ENCODE measurements at regions of chr14 and their contacts with region 1.

Region 1: DNA sequence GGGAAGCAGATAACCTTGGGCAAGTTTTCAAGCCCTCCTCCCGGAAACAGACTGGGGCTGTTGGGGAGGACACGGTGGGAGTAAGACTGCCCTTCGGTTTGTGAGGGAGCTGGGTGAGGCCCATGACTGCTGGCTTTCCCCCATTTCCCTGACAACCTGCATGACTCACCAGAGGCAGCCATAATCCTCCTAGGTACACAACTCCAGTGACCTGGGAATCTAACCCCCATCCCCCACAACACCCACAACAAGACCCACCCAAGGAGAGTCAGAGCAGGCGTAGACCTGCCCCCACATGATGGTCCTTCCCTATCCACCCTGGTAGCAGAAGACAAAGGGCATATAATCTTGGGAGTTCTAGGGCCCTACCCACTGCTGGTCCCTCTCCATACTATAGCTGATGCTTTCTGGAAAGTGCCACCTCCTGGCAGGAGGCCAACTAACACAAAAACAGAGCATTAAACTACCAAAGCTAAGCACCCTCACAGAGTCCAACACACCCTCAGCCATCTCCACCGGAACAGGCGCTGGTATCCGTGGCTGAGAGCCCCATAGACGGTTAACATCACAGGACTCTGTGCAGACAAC is 14.8 kb downstream of the DDX24 start:
- DNase-seq: no peak
- H3K4me3 ChIP-seq: no peak overlapping the region
- CTCF ChIP-seq: no peak

Region 2: GRCh38 chr14:93857500-93858283 is 208.5 kb before region 1 on chr14:
- CTCF ChIA-PET with region 1: no interaction called
- POLR2A ChIA-PET with region 1: no interaction called
- DNase-seq: no peak
- H3K4me3 ChIP-seq: no peak overlapping the region
- CTCF ChIP-seq: no peak

Region 3: GRCh38 chr14:94051115-94051514 is 15.1 kb before region 1 on chr14:
- CTCF ChIA-PET with region 1: interaction called, 45 read pairs
- POLR2A ChIA-PET with region 1: no interaction called
- DNase-seq: no peak
- H3K4me3 ChIP-seq: no peak overlapping the region
- CTCF ChIP-seq: peak; percentile 56

Region 4: DNA sequence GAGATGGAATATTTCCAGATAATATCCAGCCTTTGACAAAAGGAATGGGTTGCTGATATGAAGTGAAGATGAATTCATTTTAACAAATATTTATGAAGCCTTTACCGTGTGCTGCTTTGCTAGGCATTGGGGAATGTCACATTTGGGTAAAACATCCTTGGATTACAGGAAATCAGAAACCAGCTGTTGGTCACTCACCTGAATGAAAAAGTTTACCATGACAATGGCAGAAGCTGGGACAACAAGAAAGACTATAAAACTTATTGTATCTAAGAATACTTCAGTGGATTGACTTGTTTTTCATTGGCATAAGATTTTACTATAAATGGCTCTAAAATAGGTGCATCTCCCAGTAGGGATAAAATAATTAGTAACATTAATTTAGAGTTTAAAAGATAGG is 127.6 kb after region 1 on chr14:
- CTCF ChIA-PET with region 1: no interaction called
- POLR2A ChIA-PET with region 1: no interaction called
- DNase-seq: no peak
- H3K4me3 ChIP-seq: no peak overlapping the region
- CTCF ChIP-seq: no peak

Measured in AG04449 (cell line).